Gastrocnemius medialis (tissue), 4 donors: ENCODE measurements at regions of chr2 and their contacts with region 1.

Region 1: GRCh38 chr2:86079981-86080911 is 25.4 kb downstream of the POLR1A start:
- DNase-seq: peak; percentile 69 to 82
- ATAC-seq: peak; percentile 84 to 88
- H3K4me3 ChIP-seq: no peak overlapping the region
- H3K27ac ChIP-seq: peak overlapping the region; percentile 62 to 77 (median 68)
- H3K4me1 ChIP-seq: peaks cover 18 to 19% of the 10 kb centered on the region in 2 donors
- H3K27me3 ChIP-seq: no peaks in the 10 kb centered on the region
- CTCF ChIP-seq: peak; percentile 82 to 88 (median 86)
- POLR2A ChIP-seq: no peak

Region 2: GRCh38 chr2:85635636-85636035 is 444.6 kb before region 1 on chr2:
- in situ Hi-C with region 1: loop called in 3 of 4 experiments (anchors 25 kb)
- intact Hi-C with region 1: loop called (anchors 10 kb)
- DNase-seq: no peak
- ATAC-seq: no peak
- H3K4me3 ChIP-seq: no peak overlapping the region
- H3K27ac ChIP-seq: peak overlapping the region in 1 of 4 donors; percentile 1
- H3K4me1 ChIP-seq: no peaks in the 10 kb centered on the region
- H3K27me3 ChIP-seq: no peaks in the 10 kb centered on the region
- CTCF ChIP-seq: no peak
- POLR2A ChIP-seq: no peak

Region 3: GRCh38 chr2:85723707-85724360 is 356.4 kb before region 1 on chr2:
- in situ Hi-C with region 1: loop called in 1 of 4 experiments (anchors 5 kb)
- intact Hi-C with region 1: loop called (anchors 5 kb)
- DNase-seq: peak in 1 of 2 donors; percentile 4
- ATAC-seq: no peak
- H3K4me3 ChIP-seq: no peak overlapping the region
- H3K27ac ChIP-seq: no peak overlapping the region
- H3K4me1 ChIP-seq: peaks cover 19 to 38% of the 10 kb centered on the region in 2 donors
- H3K27me3 ChIP-seq: no peaks in the 10 kb centered on the region
- CTCF ChIP-seq: no peak
- POLR2A ChIP-seq: no peak

Region 4: DNA sequence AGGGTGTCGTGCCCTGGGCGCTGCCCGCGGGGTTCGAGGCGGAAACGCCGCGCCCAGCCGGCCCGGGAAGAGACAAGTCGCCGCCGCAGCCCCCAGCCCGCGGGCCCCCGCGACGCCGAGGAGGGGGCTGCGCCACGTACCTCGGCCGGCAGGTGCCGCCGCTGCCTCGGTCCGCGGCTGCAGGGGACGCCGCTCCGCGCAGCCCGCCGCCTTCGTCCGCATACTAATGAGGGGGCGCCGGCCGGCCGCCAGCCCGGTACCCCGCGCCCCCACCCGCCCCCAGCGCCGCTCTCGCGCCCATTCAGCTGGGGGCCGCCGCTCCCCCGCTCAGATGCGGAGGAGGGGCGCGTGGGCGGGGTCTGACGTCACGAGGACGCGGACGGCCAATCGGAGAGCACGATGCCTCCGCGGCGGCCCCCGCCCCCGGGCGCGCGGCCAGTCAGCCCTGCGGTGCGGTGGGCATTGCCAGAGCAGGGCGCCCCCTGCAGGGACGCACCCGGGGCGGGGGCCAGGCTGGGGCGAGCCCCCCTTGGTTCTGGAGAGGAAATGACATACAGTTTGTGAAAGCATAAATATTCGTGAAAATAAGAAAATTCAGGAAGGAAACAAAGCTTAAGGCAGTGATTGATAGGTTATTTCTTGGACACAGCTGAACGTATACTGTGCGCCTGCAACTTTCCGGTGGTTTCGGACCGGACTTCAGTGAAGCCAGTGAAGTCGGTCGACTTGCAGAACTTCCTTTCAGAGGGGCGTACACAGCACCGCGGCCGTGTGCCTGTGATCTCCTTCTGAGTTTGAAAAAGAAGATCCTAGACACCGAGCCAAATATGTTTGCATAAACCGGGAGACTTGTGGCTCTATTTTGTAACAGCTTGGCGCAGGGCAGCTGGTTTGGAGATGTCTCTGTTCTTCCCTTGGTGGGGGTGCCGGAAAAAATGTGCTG is 191.3 kb before region 1 on chr2 and contains the start of gene ST3GAL5:
- in situ Hi-C with region 1: loop called in 2 of 4 experiments (anchors 5 kb)
- intact Hi-C with region 1: loop called (anchors 1 kb)
- DNase-seq: peak; percentile 84
- ATAC-seq: peak; percentile 74 to 80
- H3K4me3 ChIP-seq: peak within 1 kb of the TSS; percentile 53 to 87 (median 72)
- H3K27ac ChIP-seq: peak within 1 kb of the TSS; percentile 82 to 92 (median 88)
- H3K4me1 ChIP-seq: peaks cover 28 to 33% of the 10 kb centered on the region in 2 donors
- H3K27me3 ChIP-seq: no peaks in the 10 kb centered on the region
- CTCF ChIP-seq: peak; percentile 59 to 80 (median 66)
- POLR2A ChIP-seq: peak; percentile 48 to 78
- total RNA-seq, gene ST3GAL5: 12.6 to 26.0 (median 21.8) TPM